Heart right ventricle (tissue), 16 donors: ENCODE measurements at regions of chr19 and their contacts with region 1.

Region 1: GRCh38 chr19:55385740-55386529 is at the start of gene RPL28:
- DNase-seq: peak; percentile 97 to 99
- ATAC-seq: peak; percentile 90 to 96 (median 93)
- H3K4me3 ChIP-seq: peak within 1 kb of the TSS; percentile 74 to 99 (median 80)
- H3K27ac ChIP-seq: peak within 1 kb of the TSS; percentile 77 to 97 (median 91)
- H3K4me1 ChIP-seq: peaks cover 27 to 59% (median 44%) of the 10 kb centered on the region in 9 donors
- H3K27me3 ChIP-seq: no peaks in the 10 kb centered on the region
- CTCF ChIP-seq: no peak
- total RNA-seq, gene RPL28: 473 to 1,031 (median 577) TPM

Region 2: DNA sequence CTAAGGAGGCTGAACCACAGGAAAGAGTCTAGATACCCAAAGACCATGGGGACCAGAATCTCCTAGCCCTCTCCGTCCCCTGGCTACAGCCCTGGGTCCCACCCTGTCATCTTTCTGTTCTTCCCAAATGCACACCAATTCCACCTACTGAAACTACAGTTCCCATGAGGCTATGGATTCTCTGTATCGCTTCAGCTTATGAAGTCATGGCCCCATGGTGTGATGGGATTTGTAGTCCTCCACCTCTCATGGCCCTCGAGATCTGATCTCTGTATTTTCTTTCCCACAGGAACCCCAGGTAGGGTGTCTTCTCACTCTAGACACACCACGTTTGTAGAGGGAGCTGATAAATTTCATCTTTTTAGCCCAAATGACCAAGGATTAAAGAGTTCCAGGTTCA is 188.4 kb before region 1 on chr19:
- intact Hi-C with region 1: no loop called
- DNase-seq: no peak
- ATAC-seq: no peak
- H3K4me3 ChIP-seq: no peak overlapping the region
- H3K27ac ChIP-seq: no peak overlapping the region
- H3K4me1 ChIP-seq: no peaks in the 10 kb centered on the region
- H3K27me3 ChIP-seq: no peaks in the 10 kb centered on the region
- CTCF ChIP-seq: no peak

Region 3: GRCh38 chr19:55279770-55280643 is 105.9 kb before region 1 on chr19 and contains the start of gene HSPBP1:
- intact Hi-C with region 1: loop called in 1 of 10 experiments (anchors 5 kb)
- DNase-seq: peak; percentile 90
- ATAC-seq: peak; percentile 88 to 94 (median 92)
- H3K4me3 ChIP-seq: peak within 1 kb of the TSS; percentile 48 to 84 (median 78)
- H3K27ac ChIP-seq: peak within 1 kb of the TSS; percentile 34 to 91 (median 85)
- H3K4me1 ChIP-seq: peaks cover 6 to 31% (median 15%) of the 10 kb centered on the region in 9 donors
- H3K27me3 ChIP-seq: peaks cover 0 to 12% (median 0%) of the 10 kb centered on the region in 7 donors
- CTCF ChIP-seq: no peak
- total RNA-seq, gene HSPBP1: 26.7 to 41.6 (median 31.6) TPM

Region 4: GRCh38 chr19:55289117-55289796 is 96.7 kb before region 1 on chr19:
- intact Hi-C with region 1: loop called in 2 of 10 experiments (anchors 5 kb)
- DNase-seq: no peak
- ATAC-seq: no peak
- H3K4me3 ChIP-seq: no peak overlapping the region
- H3K27ac ChIP-seq: no peak overlapping the region
- H3K4me1 ChIP-seq: peaks cover 0 to 18% (median 4%) of the 10 kb centered on the region in 9 donors
- H3K27me3 ChIP-seq: peaks cover 0 to 3% (median 0%) of the 10 kb centered on the region in 7 donors
- CTCF ChIP-seq: no peak

Region 5: DNA sequence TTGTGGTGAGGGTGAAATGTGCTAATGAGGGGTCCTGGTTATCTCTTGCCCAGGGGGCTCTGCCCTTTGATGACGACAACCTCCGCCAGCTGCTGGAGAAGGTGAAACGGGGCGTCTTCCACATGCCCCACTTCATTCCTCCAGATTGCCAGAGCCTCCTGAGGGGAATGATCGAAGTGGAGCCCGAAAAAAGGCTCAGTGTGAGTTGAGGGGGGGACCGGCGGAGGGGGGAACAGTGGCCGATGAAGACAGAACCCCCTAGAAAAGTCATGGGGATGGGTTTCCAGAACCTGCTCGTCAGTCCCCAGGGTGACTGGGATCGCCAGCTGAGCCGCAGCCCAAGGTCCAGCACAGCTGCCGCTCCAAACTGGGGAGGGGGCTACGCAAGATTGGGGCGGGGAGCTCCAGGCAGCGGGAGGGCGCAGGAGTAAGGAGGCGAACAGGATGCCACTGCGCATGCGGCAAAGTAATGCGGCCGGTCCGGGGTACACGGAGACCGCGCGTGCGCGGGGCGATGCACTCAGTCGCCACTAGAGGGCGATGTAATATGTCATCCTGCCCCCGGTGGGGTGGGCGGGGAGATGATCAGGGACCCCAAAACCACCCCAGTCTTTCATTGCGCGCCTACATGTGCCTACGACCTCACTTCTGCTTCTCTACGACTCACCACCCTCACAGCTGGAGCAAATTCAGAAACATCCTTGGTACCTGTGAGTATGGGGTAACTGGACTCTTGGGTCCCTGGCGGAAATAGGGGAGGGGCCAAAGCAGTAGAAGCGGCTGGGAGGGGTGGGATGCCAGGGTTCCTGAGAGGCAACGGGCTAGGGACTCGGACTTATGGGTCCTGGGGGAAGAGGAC is 84.2 kb before region 1 on chr19:
- intact Hi-C with region 1: loop called in 9 of 10 experiments (anchors 2 to 10 kb)
- DNase-seq: peak; percentile 86 to 93
- ATAC-seq: peak; percentile 84 to 92 (median 90)
- H3K4me3 ChIP-seq: peak overlapping the region in 8 of 10 donors; percentile 7 to 51 (median 46)
- H3K27ac ChIP-seq: peak overlapping the region in 1 of 10 donors; percentile 62
- H3K4me1 ChIP-seq: peaks cover 0 to 9% (median 3%) of the 10 kb centered on the region in 9 donors
- H3K27me3 ChIP-seq: no peaks in the 10 kb centered on the region
- CTCF ChIP-seq: peak; percentile 92 to 99 (median 97)

Region 6: DNA sequence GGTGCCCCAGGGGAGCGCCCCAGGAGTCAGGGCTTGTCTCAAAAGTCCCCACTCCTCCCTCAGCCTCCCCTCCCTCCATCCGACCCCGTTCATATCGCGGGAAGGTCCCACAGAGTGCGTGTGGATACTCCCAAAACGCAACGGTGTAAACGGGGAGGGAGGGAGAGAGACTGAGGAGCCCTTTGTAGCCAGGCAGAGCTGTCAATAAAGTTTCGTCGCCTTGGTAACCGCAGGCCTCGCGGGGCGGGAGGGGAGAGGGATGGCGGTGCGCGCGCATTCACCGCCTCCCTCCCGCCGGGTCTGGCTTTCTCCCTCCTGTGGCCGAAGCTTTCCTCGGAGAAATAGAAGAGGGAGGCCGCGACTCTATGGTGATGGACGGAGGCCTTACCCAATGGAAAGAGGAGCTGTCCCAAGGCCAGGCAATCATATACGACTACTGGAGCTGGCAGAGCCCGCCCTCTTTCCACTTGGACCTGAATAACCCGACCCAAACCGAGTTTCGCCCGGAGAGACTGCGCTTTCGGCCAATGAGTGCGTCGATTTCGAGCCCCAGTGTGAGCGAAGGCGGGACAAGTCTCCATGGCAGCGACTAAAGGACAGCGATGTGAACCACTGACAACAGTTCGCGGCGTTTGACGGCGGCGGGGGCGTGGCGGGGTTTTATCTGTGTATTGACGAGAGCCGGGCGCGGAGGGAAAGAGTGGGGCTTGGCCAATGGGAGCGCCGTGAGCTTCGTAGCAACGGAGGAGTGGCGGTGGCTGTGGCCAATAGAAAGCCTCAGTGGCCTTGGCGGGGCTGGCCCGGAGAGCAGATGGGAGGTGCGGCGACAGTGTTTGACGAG is 46.7 kb before region 1 on chr19 and contains the start of gene KMT5C:
- intact Hi-C with region 1: loop called in 4 of 10 experiments (anchors 1 to 2 kb)
- DNase-seq: peak; percentile 100
- ATAC-seq: peak; percentile 91 to 97 (median 95)
- H3K4me3 ChIP-seq: peak within 1 kb of the TSS; percentile 33 to 92 (median 72)
- H3K27ac ChIP-seq: peak within 1 kb of the TSS; percentile 65 to 95 (median 90)
- H3K4me1 ChIP-seq: peaks cover 7 to 24% (median 19%) of the 10 kb centered on the region in 9 donors
- H3K27me3 ChIP-seq: peaks cover 0 to 7% (median 0%) of the 10 kb centered on the region in 7 donors
- CTCF ChIP-seq: peak in 8 of 9 donors; percentile 26 to 68 (median 50)
- total RNA-seq, gene KMT5C: 4.0 to 9.2 (median 6.9) TPM

Region 7: DNA sequence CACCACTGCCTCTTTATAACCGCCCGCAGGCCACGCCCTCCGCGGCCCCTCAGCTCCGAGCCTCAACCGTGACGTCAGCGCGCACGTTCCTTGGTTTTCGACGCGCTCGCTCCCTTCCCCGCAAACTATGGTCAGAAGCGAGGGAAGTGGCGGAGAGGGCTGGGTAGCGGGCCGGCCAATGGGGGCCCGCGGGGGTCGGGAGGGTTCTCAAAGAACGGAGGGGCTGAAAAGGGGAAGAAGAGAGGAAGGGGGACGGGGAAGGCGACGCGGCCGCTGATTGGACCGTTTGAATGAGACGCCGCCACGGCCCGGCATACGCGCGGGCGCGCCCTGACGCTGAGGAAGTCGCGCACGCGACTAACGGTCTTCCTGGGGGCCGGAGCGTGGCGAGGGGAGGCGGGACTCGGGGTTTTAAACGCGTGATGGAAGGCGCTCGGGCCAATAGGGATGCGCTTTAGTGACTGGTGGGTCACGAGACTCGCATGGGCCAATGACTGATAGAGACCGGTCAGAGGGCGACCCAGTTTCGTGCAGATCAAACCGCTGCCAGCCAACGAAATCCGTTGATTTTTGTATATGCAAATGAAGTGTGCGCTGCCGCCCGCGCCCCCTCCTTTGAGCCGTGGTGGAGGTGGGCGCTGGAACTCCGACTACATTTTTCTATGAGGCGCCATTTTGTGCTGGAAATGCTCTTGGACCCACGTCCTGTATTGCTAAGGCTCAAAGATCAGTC is 22.0 kb after region 1 on chr19:
- intact Hi-C with region 1: loop called in 1 of 10 experiments (anchors 1 kb)
- DNase-seq: peak; percentile 98 to 99
- ATAC-seq: peak; percentile 96 to 99 (median 98)
- H3K4me3 ChIP-seq: peak overlapping the region; percentile 77 to 99 (median 92)
- H3K27ac ChIP-seq: peak overlapping the region; percentile 88 to 99 (median 96)
- H3K4me1 ChIP-seq: peaks cover 4 to 27% (median 17%) of the 10 kb centered on the region in 9 donors
- H3K27me3 ChIP-seq: no peaks in the 10 kb centered on the region
- CTCF ChIP-seq: no peak

Region 8: DNA sequence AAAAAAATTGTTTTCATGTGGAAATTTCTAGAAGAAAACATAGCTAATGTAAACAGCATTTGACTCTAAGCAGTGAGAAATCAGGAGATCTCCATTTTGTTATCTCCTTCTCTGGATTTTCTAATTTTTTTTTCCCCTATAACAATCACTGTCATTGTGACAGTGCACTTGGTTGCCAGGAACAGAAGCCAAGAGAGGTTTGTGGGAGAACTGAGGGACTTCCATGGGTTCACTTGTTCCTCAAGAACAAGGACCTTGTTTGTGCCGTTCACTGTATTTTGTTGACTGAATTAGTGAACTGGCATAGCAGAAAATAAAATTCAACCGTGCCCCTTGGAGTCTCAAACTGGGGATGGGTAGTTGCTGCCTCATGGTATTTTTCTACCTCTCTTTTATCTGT is 40.1 kb after region 1 on chr19:
- intact Hi-C with region 1: no loop called
- DNase-seq: no peak
- ATAC-seq: no peak
- H3K4me3 ChIP-seq: no peak overlapping the region
- H3K27ac ChIP-seq: no peak overlapping the region
- H3K4me1 ChIP-seq: peaks cover 0 to 4% (median 0%) of the 10 kb centered on the region in 9 donors
- H3K27me3 ChIP-seq: peaks cover 0 to 71% (median 35%) of the 10 kb centered on the region in 7 donors
- CTCF ChIP-seq: no peak

Region 9: DNA sequence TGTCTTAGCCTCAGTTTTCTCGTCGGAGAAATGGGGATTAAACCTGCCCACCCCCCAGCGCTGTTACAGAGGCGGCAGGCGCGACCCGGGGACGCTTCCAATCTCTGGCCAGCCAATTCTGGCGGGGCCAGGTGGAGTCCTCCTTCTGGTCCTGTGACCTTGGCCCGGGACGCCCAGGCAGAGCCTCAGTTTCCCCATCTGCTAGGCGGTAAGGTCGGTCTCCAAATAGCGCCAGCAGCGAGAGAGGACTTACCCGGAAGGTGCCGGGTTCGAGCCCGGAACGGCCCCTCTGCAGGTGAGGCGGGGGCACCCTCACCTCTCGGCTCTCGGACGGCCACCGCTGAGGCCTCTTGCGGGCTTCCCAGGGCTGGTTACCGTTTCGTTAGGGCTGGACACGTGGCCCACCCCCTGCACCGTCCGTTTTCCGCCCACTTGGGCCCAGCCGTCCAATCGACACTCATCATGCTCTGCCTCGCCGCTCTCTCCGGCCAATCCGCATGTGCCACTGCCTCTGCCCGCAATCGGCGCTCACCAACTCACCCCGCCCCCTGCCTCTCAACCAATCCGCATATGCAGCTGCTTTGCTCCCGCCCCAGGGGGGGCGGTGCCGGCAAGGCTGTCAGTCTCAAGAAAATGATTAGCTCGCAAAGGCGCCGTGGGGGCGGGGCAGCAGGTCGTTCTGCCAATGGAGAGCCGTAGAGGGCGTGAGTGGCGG is 75.5 kb after region 1 on chr19 and contains the start of gene ISOC2:
- intact Hi-C with region 1: loop called in 1 of 10 experiments (anchors 5 kb)
- DNase-seq: peak; percentile 100
- ATAC-seq: peak; percentile 94 to 97 (median 95)
- H3K4me3 ChIP-seq: peak within 1 kb of the TSS; percentile 48 to 86 (median 78)
- H3K27ac ChIP-seq: peak within 1 kb of the TSS; percentile 72 to 95 (median 88)
- H3K4me1 ChIP-seq: peaks cover 0 to 29% (median 17%) of the 10 kb centered on the region in 9 donors
- H3K27me3 ChIP-seq: no peaks in the 10 kb centered on the region
- CTCF ChIP-seq: peak in 2 of 9 donors; percentile 9 to 11
- total RNA-seq, gene ISOC2: 42.5 to 69.8 (median 48.3) TPM